Activated CD4-positive, alpha-beta memory T cell treated with anti-CD3 and anti-CD28 coated beads for 36 hours (primary cell): ENCODE measurements at regions of chr18 and their contacts with region 1.

Region 1: GRCh38 chr18:63378919-63379638 is 12.1 kb upstream of the KDSR start:
- DNase-seq: no peak
- H3K4me3 Mint-ChIP-seq: peak overlapping the region; percentile 23
- H3K27ac Mint-ChIP-seq: no peak overlapping the region
- H3K4me1 Mint-ChIP-seq: peaks cover 21% of the 10 kb centered on the region
- H3K27me3 Mint-ChIP-seq: no peaks in the 10 kb centered on the region

Region 2: DNA sequence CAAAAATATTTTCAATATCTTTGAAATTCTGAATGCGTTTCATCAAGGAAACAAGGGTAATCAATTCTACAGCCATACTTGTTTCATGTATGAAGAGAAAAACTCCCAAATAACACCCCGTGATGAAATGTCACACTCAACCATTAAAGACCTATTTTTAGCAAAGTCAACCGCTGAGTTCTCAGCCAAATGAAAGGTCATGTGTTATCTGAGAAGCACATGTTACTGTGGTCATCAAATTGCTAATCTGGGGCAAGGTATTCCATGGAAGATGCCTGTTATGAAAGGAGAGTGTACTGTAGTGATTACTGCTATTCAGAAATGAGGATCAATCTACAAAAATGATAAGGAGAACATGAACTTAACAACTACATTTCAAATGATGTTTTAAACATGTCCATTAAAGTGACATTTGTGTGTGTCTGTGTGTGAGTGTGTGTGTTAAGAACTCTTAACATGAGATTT is 186.2 kb before region 1 on chr18:
- CTCF ChIA-PET with region 1: no interaction called
- POLR2A ChIA-PET with region 1: no interaction called
- intact Hi-C with region 1: no loop called
- DNase-seq: no peak
- H3K4me3 Mint-ChIP-seq: no peak overlapping the region
- H3K27ac Mint-ChIP-seq: peak overlapping the region; percentile 1
- H3K4me1 Mint-ChIP-seq: peaks cover 54% of the 10 kb centered on the region
- H3K27me3 Mint-ChIP-seq: no peaks in the 10 kb centered on the region

Region 3: GRCh38 chr18:63410792-63411191 is 31.7 kb after region 1 on chr18:
- CTCF ChIA-PET with region 1: no interaction called
- POLR2A ChIA-PET with region 1: no interaction called
- intact Hi-C with region 1: loop called (anchors 2 kb)
- DNase-seq: no peak
- H3K4me3 Mint-ChIP-seq: no peak overlapping the region
- H3K27ac Mint-ChIP-seq: peak overlapping the region; percentile 15
- H3K4me1 Mint-ChIP-seq: peaks cover 46% of the 10 kb centered on the region
- H3K27me3 Mint-ChIP-seq: no peaks in the 10 kb centered on the region

Region 4: GRCh38 chr18:63427558-63427957 is 48.5 kb after region 1 on chr18:
- CTCF ChIA-PET with region 1: no interaction called
- POLR2A ChIA-PET with region 1: no interaction called
- intact Hi-C with region 1: loop called (anchors 1 kb)
- DNase-seq: peak; percentile 42
- H3K4me3 Mint-ChIP-seq: no peak overlapping the region
- H3K27ac Mint-ChIP-seq: no peak overlapping the region
- H3K4me1 Mint-ChIP-seq: peaks cover 17% of the 10 kb centered on the region
- H3K27me3 Mint-ChIP-seq: peaks cover 17% of the 10 kb centered on the region